Activated CD4-positive, alpha-beta T cell treated with anti-CD3 and anti-CD28 coated beads for 36 hours (primary cell): ENCODE measurements at regions of chr12 and their contacts with region 1.

Region 1: GRCh38 chr12:117236456-117237001 is 46.3 kb upstream of the FBXO21 start:
- DNase-seq: peak; percentile 93
- ATAC-seq: peak; percentile 66
- H3K4me3 Mint-ChIP-seq: no peak overlapping the region
- H3K27ac Mint-ChIP-seq: no peak overlapping the region
- H3K4me1 Mint-ChIP-seq: no peaks in the 10 kb centered on the region
- H3K27me3 Mint-ChIP-seq: peaks cover 14% of the 10 kb centered on the region

Region 2: DNA sequence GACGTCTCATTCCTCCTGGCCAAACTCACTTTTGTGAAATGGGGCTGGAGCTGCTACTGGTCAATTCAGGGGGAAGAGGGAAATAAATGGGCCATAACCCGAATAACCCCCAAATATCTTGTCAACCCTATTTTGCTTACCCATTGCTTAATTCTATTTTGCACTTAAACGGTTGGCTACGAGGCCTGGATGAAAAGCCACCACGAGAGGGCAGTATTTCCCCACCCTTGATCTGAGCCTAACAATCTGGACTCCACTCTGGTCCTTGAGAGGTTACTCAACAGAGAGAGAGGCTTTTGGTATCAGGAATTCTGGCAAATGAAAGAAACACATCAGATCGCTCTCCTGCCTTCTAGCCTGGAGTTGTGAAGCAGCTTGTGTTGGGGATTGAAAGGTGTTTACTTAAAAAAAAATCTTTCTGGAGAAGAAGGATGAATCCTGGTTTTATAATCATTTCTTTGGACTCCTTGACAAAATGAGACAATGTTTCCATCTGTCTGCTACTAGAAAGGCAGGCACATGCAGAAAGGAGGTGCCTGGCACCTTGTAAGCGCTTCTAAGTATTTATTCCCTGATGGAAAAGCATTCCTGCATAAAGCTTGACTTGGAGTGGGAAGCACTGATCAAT is 23.9 kb before region 1 on chr12:
- CTCF ChIA-PET with region 1: interaction called, 21 read pairs
- POLR2A ChIA-PET with region 1: no interaction called
- intact Hi-C with region 1: no loop called
- DNase-seq: peak; percentile 80
- ATAC-seq: peak; percentile 64
- H3K4me3 Mint-ChIP-seq: no peak overlapping the region
- H3K27ac Mint-ChIP-seq: no peak overlapping the region
- H3K4me1 Mint-ChIP-seq: no peaks in the 10 kb centered on the region
- H3K27me3 Mint-ChIP-seq: peaks cover 10% of the 10 kb centered on the region

Region 3: GRCh38 chr12:117356048-117356447 is 119.5 kb after region 1 on chr12:
- CTCF ChIA-PET with region 1: no interaction called
- POLR2A ChIA-PET with region 1: no interaction called
- intact Hi-C with region 1: loop called in 1 of 2 experiments (anchors 5 kb)
- DNase-seq: no peak
- ATAC-seq: no peak
- H3K4me3 Mint-ChIP-seq: no peak overlapping the region
- H3K27ac Mint-ChIP-seq: no peak overlapping the region
- H3K4me1 Mint-ChIP-seq: no peaks in the 10 kb centered on the region
- H3K27me3 Mint-ChIP-seq: peaks cover 12% of the 10 kb centered on the region

Region 4: GRCh38 chr12:117367011-117367638 is 130.6 kb after region 1 on chr12:
- CTCF ChIA-PET with region 1: interaction called, 5 read pairs
- POLR2A ChIA-PET with region 1: no interaction called
- intact Hi-C with region 1: loop called in 1 of 2 experiments (anchors 2 kb)
- DNase-seq: peak; percentile 77
- ATAC-seq: no peak
- H3K4me3 Mint-ChIP-seq: no peak overlapping the region
- H3K27ac Mint-ChIP-seq: no peak overlapping the region
- H3K4me1 Mint-ChIP-seq: no peaks in the 10 kb centered on the region
- H3K27me3 Mint-ChIP-seq: peaks cover 37% of the 10 kb centered on the region

Region 5: DNA sequence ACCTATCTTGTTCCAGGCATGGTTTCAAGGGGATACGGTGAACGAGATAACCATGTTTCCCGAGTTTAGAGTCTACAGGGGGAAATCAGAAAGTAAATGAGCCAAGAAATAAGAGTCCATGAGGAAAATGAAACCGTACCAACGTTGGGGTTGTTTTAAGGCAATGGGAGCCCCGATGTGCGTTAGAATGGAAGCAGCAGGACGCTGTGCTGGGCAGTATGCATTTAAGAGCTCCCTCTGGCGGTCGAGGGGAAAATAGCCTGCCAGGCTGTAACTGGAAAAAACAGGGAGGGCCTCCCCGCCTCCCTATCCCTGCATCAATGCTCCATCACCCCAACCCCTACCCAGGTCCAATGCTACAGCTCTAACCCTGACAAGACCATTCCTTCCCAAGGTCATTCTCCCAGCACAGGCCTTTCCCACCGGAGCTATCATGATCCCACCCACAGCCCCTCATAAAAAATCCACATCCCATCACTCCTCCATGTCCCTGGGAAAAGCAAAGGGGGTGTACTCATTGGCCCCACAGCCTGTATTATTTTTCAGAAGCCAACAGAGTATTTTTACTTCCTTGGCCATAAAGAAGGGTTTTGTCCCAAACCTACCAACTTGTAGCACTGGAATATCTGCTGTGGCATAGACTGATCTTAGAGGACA is 351.2 kb after region 1 on chr12:
- CTCF ChIA-PET with region 1: interaction called, 5 read pairs
- POLR2A ChIA-PET with region 1: no interaction called
- intact Hi-C with region 1: loop called (anchors 1 kb)
- DNase-seq: peak; percentile 70
- ATAC-seq: no peak
- H3K4me3 Mint-ChIP-seq: no peak overlapping the region
- H3K27ac Mint-ChIP-seq: no peak overlapping the region
- H3K4me1 Mint-ChIP-seq: no peaks in the 10 kb centered on the region
- H3K27me3 Mint-ChIP-seq: peaks cover 2% of the 10 kb centered on the region

Region 6: DNA sequence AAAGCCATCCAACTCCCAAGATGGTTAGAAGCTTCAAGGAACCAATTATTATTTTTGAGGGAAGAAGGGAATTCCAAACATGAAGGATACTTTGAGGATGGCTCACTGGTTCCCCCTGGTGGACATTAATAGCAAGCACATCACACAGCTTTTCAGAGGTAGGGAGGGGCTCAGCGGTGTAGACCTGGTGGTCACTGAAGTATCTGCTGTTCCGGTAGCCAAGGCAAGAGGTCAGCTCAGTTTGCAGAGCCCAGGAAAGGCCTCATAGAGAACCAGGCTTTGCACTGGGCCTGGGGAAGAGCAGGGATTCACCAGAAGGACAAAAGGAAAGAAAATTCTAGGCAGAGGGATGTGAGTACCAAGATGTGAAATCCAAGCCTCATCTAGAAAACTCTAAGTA is 613.5 kb after region 1 on chr12:
- CTCF ChIA-PET with region 1: no interaction called
- POLR2A ChIA-PET with region 1: no interaction called
- intact Hi-C with region 1: loop called in 1 of 2 experiments (anchors 5 kb)
- DNase-seq: peak; percentile 17
- ATAC-seq: peak; percentile 65
- H3K4me3 Mint-ChIP-seq: no peak overlapping the region
- H3K27ac Mint-ChIP-seq: no peak overlapping the region
- H3K4me1 Mint-ChIP-seq: no peaks in the 10 kb centered on the region
- H3K27me3 Mint-ChIP-seq: peaks cover 21% of the 10 kb centered on the region